Sciatic nerve (tissue), 2 donors: ENCODE measurements at regions of chr1 and their contacts with region 1.

Region 1: DNA sequence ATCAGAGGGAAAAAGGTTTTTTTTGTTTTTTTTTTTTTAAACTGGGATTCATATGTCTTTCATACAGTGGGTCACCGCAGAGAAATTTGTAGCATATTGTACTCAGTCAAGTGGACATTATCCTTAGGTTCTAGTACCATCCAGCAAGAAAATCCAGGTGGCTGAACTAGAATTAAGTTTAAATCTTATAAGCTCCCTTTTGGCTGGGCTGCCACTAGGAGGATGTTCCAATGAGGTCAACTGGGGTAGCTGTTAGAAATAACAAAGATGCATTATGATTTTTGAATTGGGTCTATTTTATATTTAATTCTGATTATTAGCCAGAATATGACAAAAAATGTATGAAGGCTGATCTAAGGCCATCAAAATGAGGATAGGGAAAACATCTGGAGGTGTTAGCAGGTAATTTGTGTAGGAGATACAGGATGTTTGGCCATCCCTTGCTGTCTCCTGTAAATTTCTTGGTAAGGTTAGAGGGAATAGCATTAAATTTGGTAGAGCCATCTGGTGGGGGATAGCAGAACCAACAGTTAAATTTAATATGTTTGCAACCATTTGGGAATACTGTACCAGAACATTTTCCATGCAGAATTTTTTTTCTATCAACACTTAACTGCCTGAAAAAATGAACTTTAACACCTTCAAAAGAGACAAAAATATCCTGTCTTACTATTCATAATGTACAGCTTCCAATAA is 568.5 kb upstream of the B3GALT2 start:
- DNase-seq: no peak
- ATAC-seq: no peak

Region 2: GRCh38 chr1:193799948-193800690 is 45.2 kb after region 1 on chr1:
- intact Hi-C with region 1: no loop called
- DNase-seq: no peak
- ATAC-seq: no peak

Region 3: GRCh38 chr1:193819376-193819775 is 64.5 kb after region 1 on chr1:
- intact Hi-C with region 1: loop called (anchors 2 kb)
- DNase-seq: no peak
- ATAC-seq: no peak